AG04450 (cell line): ENCODE measurements at regions of chr3 and their contacts with region 1.

Region 1: DNA sequence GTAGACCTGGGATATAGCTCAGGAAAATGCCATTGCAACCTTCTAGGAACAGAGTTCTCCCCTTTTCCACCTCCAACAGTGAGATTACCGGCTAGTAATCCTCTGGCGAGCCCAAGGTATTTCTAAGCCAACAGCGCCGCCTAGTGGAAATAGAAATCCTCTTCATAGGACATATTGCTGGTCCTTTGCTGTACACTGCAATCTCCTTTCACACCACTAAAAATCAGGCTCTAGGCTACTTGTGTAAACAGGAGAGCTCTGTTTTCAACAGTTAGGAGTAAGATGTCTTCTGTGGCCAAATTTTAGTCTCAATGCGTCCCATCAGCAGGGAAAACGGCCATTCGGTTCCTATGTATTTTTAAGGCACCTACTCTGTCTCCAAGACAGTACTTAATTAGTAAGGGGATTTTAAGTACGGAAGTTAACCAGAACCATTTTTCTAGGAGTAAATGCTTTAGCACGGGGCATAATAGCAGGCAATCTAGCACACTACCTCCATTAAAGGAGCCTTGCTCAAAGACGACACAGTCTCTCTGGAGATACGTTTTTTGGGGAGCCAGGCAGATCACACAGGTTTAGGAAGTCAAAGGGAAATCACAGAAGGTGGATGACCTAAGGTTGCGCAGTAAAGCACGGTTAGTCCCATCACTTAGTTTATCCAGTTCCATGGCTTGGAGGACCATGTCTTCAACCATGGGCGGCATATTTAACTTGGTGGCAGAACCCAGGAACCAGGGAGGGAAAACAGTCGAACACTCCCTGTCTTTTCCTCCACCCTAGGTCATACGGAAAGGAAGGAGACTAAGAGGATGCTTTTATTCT is 43.8 kb downstream of the NCEH1 start:
- DNase-seq: peak; percentile 70
- H3K4me3 ChIP-seq: no peak overlapping the region
- H3K27ac ChIP-seq: no peak overlapping the region
- H3K27me3 ChIP-seq: no peaks in the 10 kb centered on the region
- CTCF ChIP-seq: peak; percentile 89

Region 2: DNA sequence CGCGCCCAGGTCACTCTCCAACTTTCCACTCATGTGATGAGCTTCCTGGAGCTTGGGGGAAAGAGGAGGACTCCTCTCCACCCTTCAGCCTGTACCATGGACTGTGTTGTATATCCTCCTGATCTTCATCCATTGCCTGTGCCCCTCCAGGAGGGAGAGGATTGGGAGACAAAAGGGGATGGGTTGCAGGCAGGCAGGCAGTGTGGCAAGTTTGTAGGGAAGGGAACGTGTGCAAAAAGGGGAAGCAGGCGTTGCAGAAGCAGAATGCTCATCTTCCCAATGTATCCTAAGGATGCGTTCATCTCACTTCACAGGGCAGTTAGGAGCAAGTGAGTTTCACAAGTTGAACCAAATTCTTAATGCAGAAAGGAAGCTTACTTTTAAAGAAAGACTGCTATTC is 190.7 kb before region 1 on chr3:
- CTCF ChIA-PET with region 1: interaction called, 17 read pairs
- POLR2A ChIA-PET with region 1: no interaction called
- DNase-seq: no peak
- H3K4me3 ChIP-seq: no peak overlapping the region
- H3K27ac ChIP-seq: no peak overlapping the region
- H3K27me3 ChIP-seq: no peaks in the 10 kb centered on the region
- CTCF ChIP-seq: no peak

Region 3: GRCh38 chr3:172643506-172644179 is 23.4 kb before region 1 on chr3:
- CTCF ChIA-PET with region 1: interaction called, 13 read pairs
- POLR2A ChIA-PET with region 1: interaction called, 3 read pairs
- DNase-seq: no peak
- H3K4me3 ChIP-seq: no peak overlapping the region
- H3K27ac ChIP-seq: no peak overlapping the region
- H3K27me3 ChIP-seq: no peaks in the 10 kb centered on the region
- CTCF ChIP-seq: no peak

Region 4: GRCh38 chr3:172648747-172649146 is 18.3 kb before region 1 on chr3:
- CTCF ChIA-PET with region 1: interaction called, 13 read pairs
- POLR2A ChIA-PET with region 1: no interaction called
- DNase-seq: no peak
- H3K4me3 ChIP-seq: no peak overlapping the region
- H3K27ac ChIP-seq: no peak overlapping the region
- H3K27me3 ChIP-seq: no peaks in the 10 kb centered on the region
- CTCF ChIP-seq: no peak

Region 5: DNA sequence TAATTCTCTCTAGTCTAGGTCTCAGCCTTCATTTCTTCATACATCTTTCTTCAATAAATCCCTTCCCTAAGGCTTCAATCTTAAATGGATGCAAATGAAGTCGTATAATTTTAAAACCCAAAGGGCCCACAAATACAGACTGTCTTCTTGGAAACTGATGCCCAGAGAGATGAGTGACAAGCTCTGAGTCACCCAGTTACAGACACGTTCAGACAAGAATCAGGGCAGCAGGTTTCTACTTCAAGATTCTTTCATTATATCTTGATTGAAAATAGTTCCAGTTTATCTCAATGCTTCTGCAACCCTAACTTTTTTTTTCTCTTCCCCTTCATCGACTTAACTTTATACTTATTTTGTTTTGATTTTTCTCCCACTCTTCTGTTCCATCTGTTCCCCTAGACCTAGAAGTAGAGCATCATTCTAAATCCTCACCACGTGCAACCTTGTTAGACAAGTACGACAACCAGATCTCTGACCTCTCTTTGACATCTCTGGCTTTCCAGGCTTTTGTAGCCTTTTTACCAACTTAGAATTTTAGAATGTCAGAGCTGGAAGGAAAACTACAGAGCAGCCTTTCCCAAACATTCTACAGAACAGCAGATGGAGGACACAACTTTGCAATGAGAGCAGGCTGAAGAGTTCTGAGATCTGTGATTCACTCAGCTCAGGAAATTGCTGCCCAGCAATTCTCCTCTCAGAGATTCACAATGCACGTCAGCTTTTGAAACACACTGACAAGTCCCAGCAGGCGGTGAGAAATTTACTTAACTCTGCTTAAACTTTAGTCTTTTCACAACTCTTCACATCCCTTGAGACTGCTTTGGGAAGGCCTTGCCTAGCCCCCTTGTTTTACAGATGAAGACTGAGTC is 18.5 kb after region 1 on chr3:
- CTCF ChIA-PET with region 1: interaction called, 19 read pairs
- POLR2A ChIA-PET with region 1: no interaction called
- DNase-seq: no peak
- H3K4me3 ChIP-seq: no peak overlapping the region
- H3K27ac ChIP-seq: no peak overlapping the region
- H3K27me3 ChIP-seq: no peaks in the 10 kb centered on the region
- CTCF ChIP-seq: no peak

Region 6: GRCh38 chr3:172787746-172788145 is 120.7 kb after region 1 on chr3:
- CTCF ChIA-PET with region 1: no interaction called
- POLR2A ChIA-PET with region 1: no interaction called
- DNase-seq: no peak
- H3K4me3 ChIP-seq: no peak overlapping the region
- H3K27ac ChIP-seq: no peak overlapping the region
- H3K27me3 ChIP-seq: no peaks in the 10 kb centered on the region
- CTCF ChIP-seq: no peak

Region 7: DNA sequence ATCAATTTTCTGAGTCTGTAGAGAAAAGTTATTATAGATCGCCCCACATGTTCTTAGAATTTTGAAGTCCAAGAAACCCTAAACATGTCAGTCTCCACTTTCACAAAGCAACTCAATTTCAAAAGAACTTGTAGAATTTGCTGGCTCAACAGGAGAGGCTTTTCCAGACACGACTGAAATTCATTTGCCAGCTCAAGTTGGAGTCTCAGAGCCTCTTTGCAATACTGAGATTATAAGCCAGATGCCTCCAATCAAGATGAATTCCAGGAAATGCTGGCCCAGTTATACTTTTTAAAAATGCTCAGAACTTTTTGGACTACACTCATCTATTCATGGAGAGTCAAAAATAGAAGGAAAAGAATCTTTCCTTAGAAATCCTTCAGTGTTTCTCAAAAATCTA is 673.5 kb after region 1 on chr3:
- CTCF ChIA-PET with region 1: no interaction called
- POLR2A ChIA-PET with region 1: no interaction called
- DNase-seq: no peak
- H3K4me3 ChIP-seq: no peak overlapping the region
- H3K27ac ChIP-seq: no peak overlapping the region
- H3K27me3 ChIP-seq: no peaks in the 10 kb centered on the region
- CTCF ChIP-seq: no peak